HepG2 (cell line): ENCODE measurements at regions of chr1 and their contacts with region 1.

Region 1: DNA sequence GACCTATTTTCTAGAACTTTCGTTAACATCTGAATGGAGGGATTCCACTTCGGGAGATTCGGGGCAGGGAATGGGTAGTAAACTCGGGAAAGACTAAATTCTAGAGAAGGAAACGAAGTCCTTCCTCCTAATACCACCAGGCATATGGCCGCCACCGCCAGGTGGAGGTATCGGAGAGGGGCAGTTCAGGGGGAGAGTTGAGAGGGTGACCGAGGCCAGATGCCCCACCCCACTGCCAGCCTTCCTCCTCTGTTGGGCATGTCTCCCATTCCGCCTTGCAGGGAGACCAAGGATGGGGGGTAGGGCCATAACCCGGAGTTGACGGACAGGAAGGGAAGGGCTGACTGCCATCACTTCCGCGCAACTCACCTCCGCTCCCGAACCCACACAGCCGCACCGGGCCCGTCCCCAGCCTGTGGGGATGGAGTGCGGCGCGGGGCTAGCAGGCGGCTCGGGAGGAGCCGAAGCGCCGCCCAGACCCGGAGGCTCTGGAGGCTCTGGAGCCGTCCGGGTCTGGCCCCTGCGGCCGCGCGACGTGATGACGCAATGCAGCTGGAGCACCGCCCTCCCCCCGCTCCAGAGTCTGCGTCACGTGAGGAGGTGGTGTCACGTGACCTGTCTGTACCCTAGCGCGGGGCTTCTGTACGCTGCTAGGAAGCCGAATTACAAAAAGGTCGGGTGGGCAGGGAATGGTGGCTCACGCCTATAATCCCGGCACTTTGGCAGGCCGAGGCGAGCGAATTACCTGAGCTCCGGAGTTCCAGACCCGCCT is at the start of gene KLHL12:
- DNase-seq: peak; percentile 92
- ATAC-seq: peak; percentile 100
- H3K4me3 ChIP-seq: peak within 1 kb of the TSS; percentile 69 to 85 (median 81)
- H3K27ac ChIP-seq: peak within 1 kb of the TSS; percentile 83
- H3K4me1 ChIP-seq: peaks cover 16% of the 10 kb centered on the region
- H3K27me3 ChIP-seq: no peaks in the 10 kb centered on the region; a peak in 1 of 5 replicates
- CTCF ChIP-seq: peak; percentile 78
- EP300 ChIP-seq: peak in 1 of 2 experiments; percentile 58; a peak in 1 of 4 replicates
- POLR2A ChIP-seq: peak; percentile 84 to 96
- RAD21 ChIP-seq: peak; percentile 69; the same call in 1 of the 2 replicates
- total RNA-seq, gene KLHL12: 25.2 and 34.2 TPM in 2 replicates

Region 2: GRCh38 chr1:202861420-202862200 is 65.3 kb before region 1 on chr1:
- CTCF ChIA-PET with region 1: no interaction called
- POLR2A ChIA-PET with region 1: interaction called, 4 read pairs
- in situ Hi-C with region 1: no loop called
- intact Hi-C with region 1: loop called (anchors 5 kb)
- DNase-seq: peak; percentile 90
- ATAC-seq: peak; percentile 90
- H3K4me3 ChIP-seq: peak overlapping the region; percentile 79 to 91 (median 83)
- H3K27ac ChIP-seq: peak overlapping the region; percentile 95
- H3K4me1 ChIP-seq: peaks cover 61% of the 10 kb centered on the region
- H3K27me3 ChIP-seq: no peaks in the 10 kb centered on the region; a peak in 1 of 5 replicates
- CTCF ChIP-seq: no peak
- EP300 ChIP-seq: no peak
- POLR2A ChIP-seq: peak; percentile 80 to 95; a peak in 3 of 4 replicates
- RAD21 ChIP-seq: 0 out of 2 replicates have a peak, but pooled peaks have one; percentile 6

Region 3: DNA sequence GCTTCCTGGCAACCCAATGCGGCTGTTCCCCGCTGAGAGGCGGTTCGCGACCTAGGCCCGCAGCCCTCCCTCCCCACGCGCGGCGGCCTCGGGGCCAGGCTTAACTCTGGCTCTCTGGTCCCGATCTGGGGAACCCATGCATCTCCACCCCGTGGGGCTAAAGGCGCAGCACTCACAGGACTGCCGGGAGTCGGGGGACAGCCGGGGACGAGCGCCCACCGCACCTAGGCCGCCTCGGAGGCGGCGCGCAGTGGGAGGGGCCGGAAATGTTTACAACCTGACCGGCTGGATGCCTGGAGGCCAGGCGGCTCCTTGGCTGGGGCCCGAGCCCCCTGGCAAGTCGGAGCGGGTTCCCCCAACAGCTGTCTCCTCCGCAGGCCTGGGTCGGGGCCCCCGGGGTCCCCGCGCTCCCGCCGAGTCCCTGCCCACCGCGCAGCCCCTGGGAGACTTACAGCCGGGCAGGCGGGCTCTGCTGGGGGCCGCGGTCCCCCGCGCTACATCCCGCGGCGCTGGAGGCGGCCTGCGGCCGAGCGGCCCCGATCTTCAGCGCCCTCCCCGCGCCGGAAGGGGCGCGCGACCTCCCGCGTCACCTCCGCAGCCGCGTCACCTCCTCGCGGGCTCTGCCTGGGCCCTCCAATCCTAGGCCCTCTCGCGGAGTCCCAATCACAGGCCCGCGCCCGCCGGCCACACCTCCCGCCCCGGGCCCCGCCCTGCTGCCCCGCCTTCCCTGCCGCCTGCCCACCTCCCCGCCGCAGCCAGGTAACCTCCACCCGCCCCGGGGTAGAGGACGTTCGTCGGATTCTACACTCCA is 31.0 kb after region 1 on chr1 and contains the start of gene ADIPOR1:
- CTCF ChIA-PET with region 1: no interaction called
- POLR2A ChIA-PET with region 1: interaction called, 4 read pairs
- in situ Hi-C with region 1: no loop called
- intact Hi-C with region 1: loop called (anchors 1 kb)
- DNase-seq: peak; percentile 71
- ATAC-seq: peak; percentile 97
- H3K4me3 ChIP-seq: peak within 1 kb of the TSS; percentile 84 to 96 (median 84)
- H3K27ac ChIP-seq: peak within 1 kb of the TSS; percentile 75
- H3K4me1 ChIP-seq: peaks cover 57% of the 10 kb centered on the region
- H3K27me3 ChIP-seq: no peaks in the 10 kb centered on the region; a peak in 1 of 5 replicates
- CTCF ChIP-seq: peak; percentile 9; the same call in 1 of the 2 replicates
- EP300 ChIP-seq: no peak
- POLR2A ChIP-seq: peak; percentile 77 to 82
- RAD21 ChIP-seq: peak; percentile 45
- total RNA-seq, gene ADIPOR1: 55.7 and 60.0 TPM in 2 replicates

Region 4: DNA sequence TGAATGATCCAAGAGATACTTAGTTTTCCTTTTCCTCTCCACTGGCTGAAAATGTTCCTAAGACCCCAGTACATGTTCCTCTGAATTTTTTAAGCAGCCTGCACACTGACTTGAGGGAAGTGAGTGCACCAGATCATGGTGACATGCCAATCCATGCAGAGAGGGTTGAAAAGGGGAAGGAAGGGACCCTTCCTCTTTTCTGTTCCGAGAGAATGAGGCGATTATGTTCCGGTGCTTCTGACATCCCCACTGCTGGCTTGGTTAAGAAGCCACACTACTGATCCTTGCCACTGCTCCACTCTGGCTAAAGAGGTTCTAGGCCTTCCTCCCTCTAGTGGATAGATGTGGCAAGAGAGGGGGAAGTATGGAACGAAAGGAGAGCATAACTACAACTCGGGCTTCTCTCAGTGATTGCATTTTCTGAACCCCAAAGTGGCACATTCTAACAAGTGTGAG is 42.0 kb after region 1 on chr1:
- CTCF ChIA-PET with region 1: interaction called, 7 read pairs
- POLR2A ChIA-PET with region 1: interaction called, 4 read pairs
- in situ Hi-C with region 1: no loop called
- intact Hi-C with region 1: loop called (anchors 2 kb)
- DNase-seq: peak; percentile 78
- ATAC-seq: peak; percentile 89
- H3K4me3 ChIP-seq: peak overlapping the region; percentile 4 to 78 (median 65); a peak in 3 of 6 replicates
- H3K27ac ChIP-seq: no peak overlapping the region
- H3K4me1 ChIP-seq: peaks cover 25% of the 10 kb centered on the region
- H3K27me3 ChIP-seq: 0 out of 5 replicates have a peak, but pooled peaks cover 0 to 6% of the 10 kb centered on the region in 2 experiments
- CTCF ChIP-seq: peak; percentile 83
- EP300 ChIP-seq: no peak
- POLR2A ChIP-seq: no peak
- RAD21 ChIP-seq: peak; percentile 52

Region 5: DNA sequence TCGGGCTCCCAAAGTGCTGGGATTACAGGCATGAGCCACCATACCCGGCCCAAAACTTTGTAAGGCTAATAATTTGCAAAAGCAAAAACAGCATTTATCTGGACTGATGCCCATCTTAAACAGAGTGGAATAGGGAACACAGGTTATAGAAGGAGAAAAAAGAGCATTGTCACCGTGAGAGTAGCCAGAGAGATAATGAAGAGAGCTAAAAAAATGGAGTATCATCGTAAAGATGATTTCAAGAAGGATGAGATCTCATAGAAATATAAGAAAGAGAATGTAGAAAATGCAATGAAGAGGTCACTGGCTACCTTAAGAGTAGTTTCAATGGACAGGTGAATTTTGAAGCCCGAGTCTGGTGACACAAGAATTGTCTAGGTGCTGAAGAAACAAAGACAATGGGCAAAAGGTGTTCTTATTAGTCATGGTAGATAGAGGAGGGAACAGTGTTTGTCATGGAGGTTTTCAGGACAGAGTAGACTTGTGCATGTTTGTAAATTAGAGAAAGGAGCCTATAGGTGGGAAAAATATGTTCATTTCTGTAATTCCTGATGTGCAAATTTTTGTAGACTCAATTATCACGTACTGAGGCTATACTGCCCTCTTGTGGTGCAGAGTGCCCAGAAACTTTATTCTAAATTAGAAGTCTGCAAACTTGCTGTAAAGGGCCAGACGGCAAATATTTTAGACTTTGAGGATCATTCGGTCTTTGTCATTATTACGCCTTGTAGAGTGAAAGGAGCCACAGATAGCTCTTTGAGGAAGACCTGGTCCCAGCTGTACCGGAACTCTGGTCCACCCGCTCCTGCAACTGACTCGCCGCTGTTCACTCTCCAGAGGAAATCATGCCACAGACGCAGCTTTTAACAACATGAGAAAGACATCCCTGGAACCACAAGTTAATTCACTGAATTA is 72.2 kb after region 1 on chr1:
- CTCF ChIA-PET with region 1: interaction called, 12 read pairs
- POLR2A ChIA-PET with region 1: no interaction called
- in situ Hi-C with region 1: no loop called
- intact Hi-C with region 1: loop called (anchors 2 kb)
- DNase-seq: peak; percentile 47
- ATAC-seq: peak; percentile 62
- H3K4me3 ChIP-seq: peak overlapping the region; percentile 36 to 58 (median 43); a peak in 5 of 6 replicates
- H3K27ac ChIP-seq: no peak overlapping the region
- H3K4me1 ChIP-seq: peaks cover 34% of the 10 kb centered on the region
- H3K27me3 ChIP-seq: peaks cover 0 to 6% of the 10 kb centered on the region in 2 experiments; a peak in 2 of 5 replicates
- CTCF ChIP-seq: peak; percentile 77
- EP300 ChIP-seq: no peak
- POLR2A ChIP-seq: no peak
- RAD21 ChIP-seq: peak; percentile 57; the same call in 1 of the 2 replicates

Region 6: DNA sequence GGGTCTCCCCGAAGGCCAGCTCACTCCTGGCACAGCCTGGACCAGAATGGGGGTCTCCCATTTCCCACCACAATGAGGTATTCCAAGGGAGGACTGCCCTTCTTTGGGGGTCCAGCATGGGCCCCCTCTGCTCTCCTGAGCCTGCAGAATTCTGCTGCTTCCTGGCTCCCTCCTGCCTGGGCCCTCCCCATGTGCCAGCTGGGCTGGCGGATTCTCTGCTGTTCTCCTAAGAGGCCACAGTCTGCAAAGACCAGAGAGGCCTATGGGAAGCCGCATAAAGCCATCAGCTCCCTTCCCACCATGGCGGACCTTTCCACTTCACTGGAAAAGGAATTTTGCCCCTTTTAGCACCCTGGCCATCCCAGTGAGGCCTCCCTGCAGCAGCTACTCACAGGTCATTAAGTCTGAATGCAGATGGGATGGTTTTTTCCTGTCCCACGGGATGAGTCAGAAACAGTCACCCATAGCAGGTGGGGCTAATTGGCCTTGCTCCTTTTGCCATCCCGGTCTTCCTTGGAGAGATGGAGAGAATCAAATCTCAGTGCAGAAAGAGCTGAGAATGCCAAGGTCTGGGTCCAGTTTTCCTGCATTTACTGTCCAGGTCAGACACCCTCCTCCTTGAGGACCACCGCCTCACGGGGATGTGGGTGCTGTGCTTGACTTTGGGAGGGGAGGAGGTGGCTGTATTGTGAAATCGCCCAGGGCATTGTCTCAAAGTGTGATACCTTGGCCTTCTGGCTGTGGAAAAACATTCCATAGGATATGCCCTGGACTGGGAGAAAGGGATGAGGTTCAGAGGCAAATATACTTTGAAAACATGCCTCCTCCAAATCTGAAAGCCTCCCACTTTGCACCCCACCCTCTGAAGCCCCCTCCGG is 225.5 kb after region 1 on chr1:
- CTCF ChIA-PET with region 1: no interaction called
- POLR2A ChIA-PET with region 1: no interaction called
- in situ Hi-C with region 1: no loop called
- intact Hi-C with region 1: no loop called
- DNase-seq: no peak
- ATAC-seq: no peak
- H3K4me3 ChIP-seq: no peak overlapping the region
- H3K27ac ChIP-seq: no peak overlapping the region
- H3K4me1 ChIP-seq: no peaks in the 10 kb centered on the region
- H3K27me3 ChIP-seq: peaks cover 0 to 19% of the 10 kb centered on the region in 2 experiments; a peak in 1 of 5 replicates
- CTCF ChIP-seq: no peak
- EP300 ChIP-seq: no peak
- POLR2A ChIP-seq: no peak
- RAD21 ChIP-seq: no peak